ENCODE measurements at regions of chr11 and their contacts with region 1.

Region 1: DNA sequence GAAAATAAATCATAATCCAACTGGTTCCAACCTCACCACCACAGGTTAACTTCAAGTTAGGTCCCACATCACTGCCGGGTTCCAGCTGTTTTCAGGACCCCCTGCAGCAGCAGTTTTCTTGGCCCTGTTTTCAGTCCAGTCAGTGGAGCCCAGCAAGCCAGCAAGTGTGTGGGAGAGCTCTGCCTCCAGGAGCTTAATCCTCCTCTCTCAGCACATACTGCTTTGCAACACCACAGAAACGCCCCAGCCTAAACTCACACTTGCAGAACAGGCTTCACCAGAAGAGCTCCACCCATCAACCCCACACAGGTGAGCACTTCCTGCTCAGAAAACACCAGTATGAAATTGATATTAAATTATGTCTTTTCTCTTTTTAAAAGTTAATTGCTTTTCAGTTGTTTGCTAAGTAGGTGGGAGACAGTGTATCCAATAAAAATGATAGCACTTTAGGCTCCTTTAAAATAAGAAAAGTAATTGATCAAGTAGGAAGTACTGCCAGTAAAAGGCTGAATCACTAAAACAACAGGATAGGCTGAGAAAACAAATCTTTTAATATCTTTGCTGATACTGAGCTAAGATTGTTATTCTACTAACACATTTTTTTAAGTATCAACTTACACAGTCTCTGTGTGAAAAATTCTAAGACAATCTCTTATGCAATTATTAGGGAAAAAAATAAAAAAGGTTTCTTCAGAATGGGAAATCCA is 81.5 kb upstream of the TP53AIP1 start:
- DNase-seq: peak; percentile 76
- H3K4me3 Mint-ChIP-seq: peak overlapping the region; percentile 76
- H3K27ac Mint-ChIP-seq: peak overlapping the region; percentile 92
- H3K4me1 Mint-ChIP-seq: peaks cover 29% of the 10 kb centered on the region
- H3K27me3 Mint-ChIP-seq: no peaks in the 10 kb centered on the region
- CTCF ChIP-seq: no peak

Region 2: DNA sequence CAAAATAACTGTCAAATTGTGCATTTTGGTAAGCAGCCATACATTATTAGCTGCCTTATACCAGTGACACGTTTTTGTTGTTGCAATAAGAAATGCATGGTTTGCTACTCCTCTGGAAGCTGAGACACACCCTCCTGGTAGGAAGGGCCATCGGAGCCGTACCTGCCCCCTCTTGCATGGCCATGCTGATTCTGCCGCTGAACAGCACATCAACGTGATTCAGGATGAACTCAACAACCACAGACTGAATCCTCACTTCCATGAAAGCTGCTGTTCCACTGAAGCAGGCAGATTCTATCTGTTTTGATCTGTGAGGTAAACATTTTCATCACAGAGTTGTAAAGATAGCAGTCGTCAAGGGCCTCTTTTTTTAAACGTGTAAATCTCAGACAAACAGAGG is 42.9 kb before region 1 on chr11:
- CTCF ChIA-PET with region 1: no interaction called
- intact Hi-C with region 1: loop called (anchors 5 kb)
- DNase-seq: no peak
- H3K4me3 Mint-ChIP-seq: no peak overlapping the region
- H3K27ac Mint-ChIP-seq: no peak overlapping the region
- H3K4me1 Mint-ChIP-seq: no peaks in the 10 kb centered on the region
- H3K27me3 Mint-ChIP-seq: no peaks in the 10 kb centered on the region
- CTCF ChIP-seq: no peak

Region 3: DNA sequence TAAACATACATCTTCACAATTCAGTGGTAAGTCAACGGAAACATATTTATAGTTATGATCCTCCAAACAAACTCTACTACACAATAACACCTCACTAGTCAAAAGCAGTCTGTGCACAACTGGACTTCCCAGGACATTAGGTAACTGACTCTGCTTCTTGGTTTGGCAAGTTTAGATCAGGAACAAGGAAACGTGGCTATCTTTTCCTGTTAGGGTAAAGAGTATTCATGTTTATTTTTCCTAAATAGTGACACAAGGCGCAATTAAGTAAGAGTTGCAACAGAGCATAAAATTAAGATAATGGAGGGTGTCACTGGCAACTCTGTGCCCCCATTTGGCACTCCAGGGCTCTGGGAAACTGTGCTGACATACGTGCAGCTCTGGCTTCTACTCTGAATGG is 11.2 kb before region 1 on chr11:
- CTCF ChIA-PET with region 1: no interaction called
- intact Hi-C with region 1: no loop called
- DNase-seq: no peak
- H3K4me3 Mint-ChIP-seq: no peak overlapping the region
- H3K27ac Mint-ChIP-seq: no peak overlapping the region
- H3K4me1 Mint-ChIP-seq: peaks cover 8% of the 10 kb centered on the region
- H3K27me3 Mint-ChIP-seq: no peaks in the 10 kb centered on the region
- CTCF ChIP-seq: no peak

Region 4: GRCh38 chr11:129061466-129062194 is 37.5 kb after region 1 on chr11:
- CTCF ChIA-PET with region 1: no interaction called
- intact Hi-C with region 1: loop called (anchors 5 kb)
- DNase-seq: peak; percentile 52
- H3K4me3 Mint-ChIP-seq: peak overlapping the region; percentile 12
- H3K27ac Mint-ChIP-seq: peak overlapping the region; percentile 39
- H3K4me1 Mint-ChIP-seq: no peaks in the 10 kb centered on the region
- H3K27me3 Mint-ChIP-seq: no peaks in the 10 kb centered on the region
- CTCF ChIP-seq: no peak

Measured in Calu3 (cell line).